PC-9 (cell line): ENCODE measurements at regions of chr20 and their contacts with region 1.

Region 1: GRCh38 chr20:62201173-62202082 is 18.6 kb downstream of the MTG2 start:
- DNase-seq: no peak
- H3K4me3 ChIP-seq: no peak overlapping the region
- H3K27ac ChIP-seq: no peak overlapping the region
- H3K4me1 ChIP-seq: no peaks in the 10 kb centered on the region
- H3K27me3 ChIP-seq: no peaks in the 10 kb centered on the region
- CTCF ChIP-seq: no peak

Region 2: DNA sequence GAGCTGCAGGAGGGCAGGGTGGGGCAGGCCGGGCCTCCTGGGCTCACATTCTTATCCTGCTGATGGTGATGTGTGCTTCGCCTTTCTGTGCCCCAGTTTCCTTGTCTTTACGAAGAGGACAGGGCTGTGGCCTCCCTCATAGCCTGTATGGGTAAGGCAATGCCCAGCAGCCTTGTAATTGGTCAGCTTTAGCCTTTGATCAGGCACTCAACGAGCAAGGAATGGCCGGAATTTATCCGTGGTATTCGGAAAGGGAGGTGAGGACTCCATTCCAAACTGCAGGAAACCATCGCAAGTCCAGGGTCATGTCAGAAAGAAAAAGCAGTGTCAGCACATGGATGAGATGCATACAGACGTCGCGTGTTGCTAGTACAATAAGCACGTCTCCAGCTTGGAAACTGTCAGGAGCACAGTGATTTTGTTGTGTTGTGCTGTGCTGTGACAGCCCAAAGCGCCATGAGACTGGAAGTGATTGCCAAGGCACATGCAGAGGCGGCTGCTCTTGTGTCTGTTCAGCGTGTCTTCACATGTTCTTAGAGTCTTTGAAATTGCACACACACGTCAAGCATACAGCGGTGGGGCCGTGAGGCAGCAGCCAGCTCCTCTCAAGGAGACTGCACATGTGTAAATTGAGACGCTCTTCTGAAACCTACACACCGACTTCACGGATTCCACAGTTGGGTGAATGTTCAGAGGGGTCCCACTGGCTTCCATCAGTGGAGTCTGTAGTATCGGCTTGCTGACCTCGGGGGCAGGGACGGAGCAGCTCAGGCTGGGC is 51.7 kb before region 1 on chr20:
- CTCF ChIA-PET with region 1: no interaction called
- POLR2A ChIA-PET with region 1: no interaction called
- intact Hi-C with region 1: no loop called
- DNase-seq: no peak
- H3K4me3 ChIP-seq: no peak overlapping the region
- H3K27ac ChIP-seq: no peak overlapping the region
- H3K4me1 ChIP-seq: peaks cover 15% of the 10 kb centered on the region
- H3K27me3 ChIP-seq: no peaks in the 10 kb centered on the region
- CTCF ChIP-seq: no peak

Region 3: GRCh38 chr20:62186887-62187866 is 14.3 kb before region 1 on chr20:
- CTCF ChIA-PET with region 1: no interaction called
- POLR2A ChIA-PET with region 1: no interaction called
- intact Hi-C with region 1: no loop called
- DNase-seq: no peak
- H3K4me3 ChIP-seq: no peak overlapping the region
- H3K27ac ChIP-seq: no peak overlapping the region
- H3K4me1 ChIP-seq: peaks cover 8% of the 10 kb centered on the region
- H3K27me3 ChIP-seq: no peaks in the 10 kb centered on the region
- CTCF ChIP-seq: no peak

Region 4: DNA sequence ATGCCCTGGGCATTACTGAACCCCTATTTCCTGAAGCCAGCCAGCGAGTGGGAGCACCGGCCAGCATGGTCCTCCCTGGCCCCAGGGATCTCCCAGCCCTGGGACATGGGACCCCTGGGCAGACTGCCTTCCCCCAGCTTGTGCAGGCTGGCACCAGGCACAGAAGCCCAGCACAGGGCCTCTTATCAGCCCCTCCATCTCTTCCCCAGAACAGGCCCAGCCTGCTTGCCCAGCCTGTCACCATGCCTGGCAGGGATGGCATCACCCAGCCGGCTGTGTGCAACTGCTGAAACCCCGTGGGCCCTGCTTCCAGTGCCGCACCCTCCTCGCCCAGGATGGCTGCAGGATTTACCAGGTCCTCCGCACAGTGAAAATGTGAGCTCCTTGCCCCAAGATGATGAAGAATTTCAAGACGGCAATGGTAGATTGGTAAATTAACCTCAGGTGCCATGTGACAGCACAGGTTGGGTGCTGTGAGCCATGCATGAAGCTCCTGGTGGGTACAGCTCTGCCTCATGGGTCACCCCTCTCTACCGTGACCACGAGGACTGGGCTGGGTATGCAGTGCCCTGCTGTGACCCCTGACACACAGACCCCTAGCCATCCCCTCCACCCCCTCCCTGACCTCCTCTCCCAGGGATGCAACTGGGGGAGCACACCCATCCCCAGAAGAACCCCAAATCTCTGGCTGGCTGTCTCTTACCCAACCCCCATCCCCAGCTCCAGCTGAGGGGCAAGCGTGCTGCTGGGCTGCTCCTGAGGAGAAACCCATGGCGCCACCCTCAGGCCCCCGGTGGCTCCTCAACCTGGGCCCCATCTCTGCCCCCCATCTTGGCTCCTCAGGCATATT is 31.0 kb after region 1 on chr20:
- CTCF ChIA-PET with region 1: interaction called, 13 read pairs
- POLR2A ChIA-PET with region 1: no interaction called
- intact Hi-C with region 1: no loop called
- DNase-seq: peak; percentile 89 to 91
- H3K4me3 ChIP-seq: no peak overlapping the region
- H3K27ac ChIP-seq: 0 out of 2 replicates have a peak overlapping the region, but pooled peaks have one; percentile 2
- H3K4me1 ChIP-seq: peaks cover 24% of the 10 kb centered on the region
- H3K27me3 ChIP-seq: no peaks in the 10 kb centered on the region; the same call in 1 of the 2 replicates
- CTCF ChIP-seq: no peak